AG04449 (cell line): ENCODE measurements at regions of chr17 and their contacts with region 1.

Region 1: GRCh38 chr17:48175692-48176470 is 68.3 kb downstream of the SNX11 start:
- DNase-seq: peak; percentile 37
- H3K4me3 ChIP-seq: no peak overlapping the region
- CTCF ChIP-seq: no peak

Region 2: DNA sequence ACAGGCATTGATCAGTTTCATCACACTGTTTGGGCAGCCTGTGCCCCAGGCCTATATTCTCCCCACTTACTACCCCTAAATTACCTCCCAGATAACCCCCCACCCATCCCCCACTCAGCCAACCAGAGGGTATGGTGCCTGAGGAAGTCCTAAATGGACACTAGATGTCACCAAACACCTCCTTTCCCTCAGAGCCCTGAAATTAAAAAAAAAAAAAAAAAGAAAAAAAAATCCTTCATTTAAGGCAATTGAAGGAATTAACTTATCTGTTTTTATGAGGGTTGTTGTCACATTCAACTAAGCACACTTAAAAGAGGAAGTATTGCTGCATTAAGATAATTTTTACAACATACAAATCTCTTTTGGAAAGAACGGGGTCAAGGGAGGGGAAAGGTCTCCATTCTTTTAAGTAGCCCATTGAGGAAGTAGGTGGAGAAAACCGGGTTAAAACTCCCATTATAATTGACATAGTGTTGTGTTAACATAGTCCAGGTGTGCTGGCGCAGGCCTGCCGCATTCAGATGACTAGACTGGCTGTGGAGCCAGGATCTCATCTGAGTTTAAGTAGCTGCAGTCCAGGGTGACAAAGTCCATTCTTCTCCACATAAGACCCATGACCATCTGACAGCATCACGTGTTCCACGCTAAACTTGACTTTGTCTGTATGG is 22.1 kb before region 1 on chr17:
- CTCF ChIA-PET with region 1: interaction called, 21 read pairs
- POLR2A ChIA-PET with region 1: no interaction called
- DNase-seq: no peak
- H3K4me3 ChIP-seq: no peak overlapping the region
- CTCF ChIP-seq: peak; percentile 44